ENCODE measurements at regions of chr22 and their contacts with region 1.

Region 1: DNA sequence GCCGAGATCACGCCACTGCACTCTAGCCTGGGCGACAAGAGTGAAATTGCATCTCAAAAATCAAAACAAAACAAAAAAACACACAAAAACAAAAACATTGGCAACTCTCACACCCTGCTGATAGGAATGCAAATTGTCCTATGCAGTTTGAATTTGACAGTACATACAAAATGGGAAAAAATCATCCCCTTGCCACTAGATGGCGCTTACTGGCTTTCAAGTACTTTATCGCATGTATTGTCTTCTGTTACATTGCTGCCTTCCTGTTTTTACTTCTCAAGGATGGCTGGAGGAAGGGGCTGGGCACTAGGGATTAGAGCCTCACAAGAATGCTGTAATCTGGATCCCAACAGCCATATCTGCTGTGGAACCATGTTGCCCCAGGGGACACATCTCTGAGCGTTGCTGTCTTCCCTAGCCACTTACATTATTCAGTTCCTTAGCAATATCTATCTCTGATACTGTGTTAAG is 59.4 kb upstream of the A4GALT start:
- DNase-seq: peak; percentile 68 to 82 (median 72)
- H3K4me3 ChIP-seq: no peak overlapping the region
- H3K4me3 Mint-ChIP-seq: no peak overlapping the region
- H3K27ac ChIP-seq: no peak overlapping the region
- H3K27ac Mint-ChIP-seq: peak overlapping the region in 1 of 7 donors; percentile 76
- H3K4me1 ChIP-seq: peaks cover 0 to 2% of the 10 kb centered on the region in 2 donors
- H3K4me1 Mint-ChIP-seq: peaks cover 2% of the 10 kb centered on the region
- H3K27me3 ChIP-seq: no peaks in the 10 kb centered on the region
- H3K27me3 Mint-ChIP-seq: peaks cover 0 to 1% (median under 1%) of the 10 kb centered on the region in 3 donors
- CTCF ChIP-seq: peak; percentile 82

Region 2: GRCh38 chr22:42732081-42732480 is 48.0 kb before region 1 on chr22:
- intact Hi-C with region 1: loop called in 1 of 2 experiments (anchors 10 kb)
- DNase-seq: no peak
- H3K4me3 ChIP-seq: no peak overlapping the region
- H3K4me3 Mint-ChIP-seq: no peak overlapping the region
- H3K27ac ChIP-seq: no peak overlapping the region
- H3K27ac Mint-ChIP-seq: peak overlapping the region in 2 of 7 donors; percentile 0 to 57
- H3K4me1 ChIP-seq: peaks cover 4% of the 10 kb centered on the region in 2 donors
- H3K4me1 Mint-ChIP-seq: peaks cover 11% of the 10 kb centered on the region
- H3K27me3 ChIP-seq: no peaks in the 10 kb centered on the region
- H3K27me3 Mint-ChIP-seq: peaks cover 7 to 16% (median 8%) of the 10 kb centered on the region in 3 donors
- CTCF ChIP-seq: no peak

Region 3: DNA sequence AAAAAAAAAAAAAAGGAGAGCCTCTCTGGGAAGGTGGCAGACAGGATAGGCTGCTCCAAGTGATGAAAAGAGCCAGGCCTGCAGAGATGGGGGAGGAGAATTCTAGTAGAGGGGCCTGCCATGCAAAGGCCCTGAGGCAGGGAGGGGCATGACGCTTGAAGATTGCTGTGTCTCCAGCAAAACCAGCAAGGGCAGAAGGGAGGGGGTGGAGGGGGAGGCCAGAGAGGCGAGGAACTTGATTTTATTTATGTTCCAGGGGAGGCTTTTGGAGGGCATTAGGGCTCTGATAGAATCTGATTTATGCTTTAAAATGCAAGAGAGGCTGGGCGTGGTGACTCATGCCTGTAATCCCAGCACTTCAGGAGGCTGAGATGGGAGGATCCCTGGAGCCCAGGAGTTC is 251.5 kb after region 1 on chr22:
- intact Hi-C with region 1: loop called in 1 of 2 experiments (anchors 5 kb)
- DNase-seq: no peak
- H3K4me3 ChIP-seq: no peak overlapping the region
- H3K4me3 Mint-ChIP-seq: no peak overlapping the region
- H3K27ac ChIP-seq: no peak overlapping the region
- H3K27ac Mint-ChIP-seq: no peak overlapping the region
- H3K4me1 ChIP-seq: no peaks in the 10 kb centered on the region
- H3K4me1 Mint-ChIP-seq: peaks cover 10% of the 10 kb centered on the region
- H3K27me3 ChIP-seq: no peaks in the 10 kb centered on the region
- H3K27me3 Mint-ChIP-seq: peaks cover 0 to 5% (median 1%) of the 10 kb centered on the region in 3 donors
- CTCF ChIP-seq: no peak

Measured in CD14-positive monocyte (primary cell).